ENCODE measurements at regions of chr10 and their contacts with region 1.

Region 1: GRCh38 chr10:96719850-96720421 is 378 bp downstream of the PIK3AP1 start:
- DNase-seq: peak; percentile 79
- ATAC-seq: peak; percentile 68
- H3K4me3 Mint-ChIP-seq: peak overlapping the region; percentile 100
- H3K27ac Mint-ChIP-seq: peak overlapping the region; percentile 97
- H3K4me1 Mint-ChIP-seq: peaks cover 80% of the 10 kb centered on the region
- H3K27me3 Mint-ChIP-seq: no peaks in the 10 kb centered on the region
- CTCF ChIP-seq: peak; percentile 83

Region 2: GRCh38 chr10:96586419-96587263 is 133.3 kb before region 1 on chr10 and contains the start of gene TM9SF3:
- CTCF ChIA-PET with region 1: no interaction called
- POLR2A ChIA-PET with region 1: no interaction called
- intact Hi-C with region 1: loop called (anchors 1 kb)
- DNase-seq: peak; percentile 84
- ATAC-seq: peak; percentile 82
- H3K4me3 Mint-ChIP-seq: peak within 1 kb of the TSS; percentile 87
- H3K27ac Mint-ChIP-seq: peak within 1 kb of the TSS; percentile 71
- H3K4me1 Mint-ChIP-seq: peaks cover 36% of the 10 kb centered on the region
- H3K27me3 Mint-ChIP-seq: no peaks in the 10 kb centered on the region
- CTCF ChIP-seq: no peak
- total RNA-seq, gene TM9SF3: 61.7 and 62.7 TPM in 2 replicates

Region 3: DNA sequence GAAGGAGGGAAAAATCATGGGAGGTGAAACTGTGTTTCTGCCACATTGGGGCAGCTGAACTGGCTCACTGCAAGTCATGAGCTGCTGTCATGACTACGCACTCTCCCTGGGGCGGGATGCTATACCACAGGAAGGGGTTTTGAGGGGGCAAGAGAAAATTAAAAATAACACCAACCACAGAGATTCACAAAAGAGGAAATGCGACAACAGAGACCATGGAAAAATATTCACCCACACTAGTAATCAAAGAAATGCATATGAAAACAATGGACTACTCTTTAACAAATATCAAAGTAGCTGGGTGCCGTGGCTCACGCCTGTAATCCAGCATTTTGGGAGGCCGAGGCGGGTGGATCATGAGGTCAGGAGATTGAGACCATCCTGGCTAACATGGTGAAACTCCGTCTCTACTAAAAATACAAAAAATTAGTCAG is 67.9 kb before region 1 on chr10:
- CTCF ChIA-PET with region 1: interaction called, 19 read pairs
- POLR2A ChIA-PET with region 1: interaction called, 14 read pairs
- intact Hi-C with region 1: loop called (anchors 1 kb)
- DNase-seq: peak; percentile 42
- ATAC-seq: peak; percentile 85
- H3K4me3 Mint-ChIP-seq: peak overlapping the region; percentile 60
- H3K27ac Mint-ChIP-seq: peak overlapping the region; percentile 89
- H3K4me1 Mint-ChIP-seq: peaks cover 87% of the 10 kb centered on the region
- H3K27me3 Mint-ChIP-seq: no peaks in the 10 kb centered on the region
- CTCF ChIP-seq: no peak

Region 4: GRCh38 chr10:96700374-96701099 is 19.4 kb before region 1 on chr10:
- CTCF ChIA-PET with region 1: interaction called, 12 read pairs
- POLR2A ChIA-PET with region 1: interaction called, 29 read pairs
- intact Hi-C with region 1: loop called (anchors 1 kb)
- DNase-seq: peak; percentile 70
- ATAC-seq: peak; percentile 90
- H3K4me3 Mint-ChIP-seq: peak overlapping the region; percentile 94
- H3K27ac Mint-ChIP-seq: peak overlapping the region; percentile 97
- H3K4me1 Mint-ChIP-seq: peaks cover 89% of the 10 kb centered on the region
- H3K27me3 Mint-ChIP-seq: no peaks in the 10 kb centered on the region
- CTCF ChIP-seq: no peak

Region 5: GRCh38 chr10:96743988-96744585 is 24.2 kb after region 1 on chr10:
- CTCF ChIA-PET with region 1: interaction called, 6 read pairs
- POLR2A ChIA-PET with region 1: interaction called, 8 read pairs
- intact Hi-C with region 1: loop called (anchors 1 kb)
- DNase-seq: no peak
- ATAC-seq: no peak
- H3K4me3 Mint-ChIP-seq: no peak overlapping the region
- H3K27ac Mint-ChIP-seq: peak overlapping the region; percentile 77
- H3K4me1 Mint-ChIP-seq: peaks cover 73% of the 10 kb centered on the region
- H3K27me3 Mint-ChIP-seq: no peaks in the 10 kb centered on the region
- CTCF ChIP-seq: no peak

Region 6: GRCh38 chr10:96772194-96772593 is 52.3 kb after region 1 on chr10:
- CTCF ChIA-PET with region 1: no interaction called
- POLR2A ChIA-PET with region 1: no interaction called
- intact Hi-C with region 1: no loop called
- DNase-seq: no peak
- ATAC-seq: no peak
- H3K4me3 Mint-ChIP-seq: no peak overlapping the region
- H3K27ac Mint-ChIP-seq: no peak overlapping the region
- H3K4me1 Mint-ChIP-seq: peaks cover 5% of the 10 kb centered on the region
- H3K27me3 Mint-ChIP-seq: no peaks in the 10 kb centered on the region
- CTCF ChIP-seq: no peak

Region 7: DNA sequence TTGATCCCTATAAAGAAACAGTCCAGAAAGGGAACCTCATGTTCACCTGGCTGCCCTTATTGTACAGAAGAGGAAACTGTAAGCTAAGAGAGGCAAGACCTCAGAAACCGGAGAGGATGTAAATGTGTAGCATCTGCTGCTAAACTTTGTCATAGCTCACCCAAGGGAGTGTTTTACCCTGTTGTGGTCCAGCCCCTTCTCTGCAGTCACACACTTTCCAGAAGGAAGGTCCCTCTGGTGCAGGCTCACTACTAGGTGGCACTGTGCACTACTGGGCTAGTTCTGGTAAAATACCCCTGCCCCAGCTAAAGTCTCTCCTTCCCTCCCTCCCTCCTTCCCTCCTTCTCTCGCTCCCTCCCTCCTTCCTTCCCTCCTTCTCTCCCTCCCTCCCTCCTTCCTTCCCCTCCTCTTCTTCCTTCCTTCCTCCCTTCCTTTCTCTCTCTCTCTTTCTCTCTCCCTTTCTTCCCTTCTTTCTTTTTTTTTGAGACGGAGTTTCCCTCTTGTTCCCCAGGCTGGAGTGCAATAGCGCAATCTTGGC is 69.7 kb after region 1 on chr10:
- CTCF ChIA-PET with region 1: no interaction called
- POLR2A ChIA-PET with region 1: no interaction called
- intact Hi-C with region 1: loop called (anchors 1 kb)
- DNase-seq: no peak
- ATAC-seq: peak; percentile 98
- H3K4me3 Mint-ChIP-seq: peak overlapping the region; percentile 48
- H3K27ac Mint-ChIP-seq: peak overlapping the region; percentile 78
- H3K4me1 Mint-ChIP-seq: peaks cover 19% of the 10 kb centered on the region
- H3K27me3 Mint-ChIP-seq: no peaks in the 10 kb centered on the region
- CTCF ChIP-seq: no peak